Tibial artery (tissue), 4 donors: ENCODE measurements at regions of chr17 and their contacts with region 1.

Region 1: GRCh38 chr17:81119223-81120148 is 45.8 kb upstream of the PVALEF start:
- DNase-seq: no peak
- H3K4me3 ChIP-seq: peak overlapping the region; percentile 22 to 29
- H3K27ac ChIP-seq: no peak overlapping the region
- H3K4me1 ChIP-seq: peaks cover 0 to 20% (median 8%) of the 10 kb centered on the region in 4 donors
- H3K27me3 ChIP-seq: peaks cover 0 to 87% of the 10 kb centered on the region in 2 donors
- CTCF ChIP-seq: no peak

Region 2: GRCh38 chr17:81579821-81580321 is 460.4 kb after region 1 on chr17:
- intact Hi-C with region 1: loop called (anchors 10 kb)
- DNase-seq: no peak
- H3K4me3 ChIP-seq: no peak overlapping the region
- H3K27ac ChIP-seq: no peak overlapping the region
- H3K4me1 ChIP-seq: peaks cover 5 to 31% (median 25%) of the 10 kb centered on the region in 4 donors
- H3K27me3 ChIP-seq: no peaks in the 10 kb centered on the region
- CTCF ChIP-seq: no peak